ENCODE measurements at regions of chr7 and their contacts with region 1.

Region 1: GRCh38 chr7:85928500-85928899 is 715.2 kb upstream of the GRM3 start:
- DNase-seq: no peak
- H3K4me3 ChIP-seq: no peak overlapping the region
- H3K27ac ChIP-seq: no peak overlapping the region
- H3K4me1 ChIP-seq: no peaks in the 10 kb centered on the region
- CTCF ChIP-seq: no peak

Region 2: DNA sequence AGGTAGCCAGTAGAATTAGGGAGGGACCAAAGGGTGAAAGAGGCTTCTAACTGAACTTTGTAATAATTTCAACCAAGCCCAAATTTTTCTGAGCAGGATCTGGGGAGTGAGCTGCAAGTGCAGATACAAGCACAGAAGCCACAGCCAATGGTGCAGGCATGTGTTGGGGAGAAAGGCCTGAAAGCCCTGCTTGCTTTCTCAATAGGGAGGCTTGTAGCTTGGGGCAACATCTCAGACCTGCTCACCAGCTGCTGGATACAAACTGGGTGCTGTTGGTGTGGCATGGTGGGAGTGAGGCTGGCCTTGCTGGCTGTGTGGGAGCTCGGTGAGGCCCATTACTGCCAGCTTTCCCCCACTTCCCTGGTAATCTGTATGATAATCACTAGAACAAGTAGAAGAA is 53.1 kb before region 1 on chr7:
- CTCF ChIA-PET with region 1: no interaction called
- POLR2A ChIA-PET with region 1: no interaction called
- intact Hi-C with region 1: loop called (anchors 5 kb)
- DNase-seq: no peak
- H3K4me3 ChIP-seq: no peak overlapping the region
- H3K27ac ChIP-seq: no peak overlapping the region
- H3K4me1 ChIP-seq: no peaks in the 10 kb centered on the region
- CTCF ChIP-seq: no peak